Heart left ventricle (tissue), 16 donors: ENCODE measurements at regions of chr19 and their contacts with region 1.

Region 1: GRCh38 chr19:11293433-11294389 is 2.2 kb upstream of the TSPAN16 start:
- DNase-seq: peak; percentile 92 to 98 (median 96)
- ATAC-seq: peak; percentile 88 to 99 (median 98)
- H3K4me3 ChIP-seq: peak overlapping the region in 10 of 12 donors; percentile 9 to 43 (median 18)
- H3K27ac ChIP-seq: peak overlapping the region in 11 of 12 donors; percentile 5 to 74 (median 52)
- H3K4me1 ChIP-seq: peaks cover 0 to 32% (median 6%) of the 10 kb centered on the region in 12 donors
- H3K27me3 ChIP-seq: no peaks in the 10 kb centered on the region
- CTCF ChIP-seq: peak; percentile 95 to 100 (median 98)
- POLR2A ChIP-seq: peak in 1 of 2 donors; percentile 23

Region 2: GRCh38 chr19:11064831-11065303 is 228.8 kb before region 1 on chr19:
- intact Hi-C with region 1: no loop called
- DNase-seq: no peak
- ATAC-seq: peak in 1 of 4 donors; percentile 18
- H3K4me3 ChIP-seq: no peak overlapping the region
- H3K27ac ChIP-seq: no peak overlapping the region
- H3K4me1 ChIP-seq: peaks cover 0 to 4% (median 0%) of the 10 kb centered on the region in 12 donors
- H3K27me3 ChIP-seq: no peaks in the 10 kb centered on the region
- CTCF ChIP-seq: no peak
- POLR2A ChIP-seq: no peak

Region 3: GRCh38 chr19:11339254-11340098 is 45.8 kb after region 1 on chr19 and contains the start of gene RAB3D:
- intact Hi-C with region 1: loop called in 3 of 10 experiments (anchors 1 to 5 kb)
- DNase-seq: peak; percentile 93 to 96 (median 95)
- ATAC-seq: peak; percentile 92 to 98 (median 97)
- H3K4me3 ChIP-seq: peak within 1 kb of the TSS; percentile 56 to 88 (median 77)
- H3K27ac ChIP-seq: peak within 1 kb of the TSS; percentile 41 to 85 (median 78)
- H3K4me1 ChIP-seq: peaks cover 0 to 39% (median 14%) of the 10 kb centered on the region in 12 donors
- H3K27me3 ChIP-seq: no peaks in the 10 kb centered on the region
- CTCF ChIP-seq: no peak
- POLR2A ChIP-seq: peak in 1 of 2 donors; percentile 56
- total RNA-seq, gene RAB3D: 5.4 to 15.1 (median 7.4) TPM

Region 4: DNA sequence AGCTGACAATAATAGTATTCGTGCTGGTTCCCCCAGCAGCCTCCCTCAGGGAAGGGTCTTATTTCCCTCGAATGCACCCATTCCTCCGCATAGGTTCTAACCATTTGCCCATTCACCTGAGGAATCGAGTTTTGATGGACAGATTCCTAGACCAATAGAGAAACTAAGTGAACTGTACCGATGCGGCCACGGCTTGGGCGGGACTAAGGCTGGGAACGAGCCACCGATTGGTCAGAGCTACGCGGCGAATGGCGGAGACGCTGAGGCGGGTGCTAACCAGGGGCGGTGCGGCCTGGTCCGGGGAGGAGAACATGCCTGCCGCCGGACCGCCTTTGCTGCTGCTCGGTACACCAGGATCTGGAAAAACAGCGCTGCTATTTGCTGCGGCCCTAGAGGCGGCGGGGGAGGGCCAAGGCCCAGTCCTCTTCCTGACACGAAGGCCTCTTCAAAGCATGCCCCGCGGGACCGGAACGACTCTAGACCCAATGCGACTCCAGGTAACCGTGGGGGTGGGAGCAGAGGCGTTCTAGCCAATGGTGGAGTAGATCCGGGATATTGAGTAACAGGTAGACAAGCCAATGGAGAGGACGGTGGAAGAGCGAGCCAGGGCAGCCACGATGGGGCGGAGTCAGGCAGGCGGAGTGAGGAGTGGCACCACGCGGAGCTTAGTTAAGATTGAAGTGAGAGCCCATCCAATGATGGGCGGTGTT is 80.9 kb after region 1 on chr19 and contains the start of gene SWSAP1:
- intact Hi-C with region 1: loop called in 6 of 10 experiments (anchors 10 kb)
- DNase-seq: peak; percentile 99
- ATAC-seq: peak; percentile 96 to 98 (median 98)
- H3K4me3 ChIP-seq: peak within 1 kb of the TSS; percentile 25 to 90 (median 70)
- H3K27ac ChIP-seq: peak within 1 kb of the TSS; percentile 92 to 100 (median 96)
- H3K4me1 ChIP-seq: peaks cover 7 to 48% (median 21%) of the 10 kb centered on the region in 12 donors
- H3K27me3 ChIP-seq: no peaks in the 10 kb centered on the region
- CTCF ChIP-seq: no peak
- POLR2A ChIP-seq: no peak
- total RNA-seq, gene SWSAP1: 0.67 to 1.9 (median 1.5) TPM

Region 5: DNA sequence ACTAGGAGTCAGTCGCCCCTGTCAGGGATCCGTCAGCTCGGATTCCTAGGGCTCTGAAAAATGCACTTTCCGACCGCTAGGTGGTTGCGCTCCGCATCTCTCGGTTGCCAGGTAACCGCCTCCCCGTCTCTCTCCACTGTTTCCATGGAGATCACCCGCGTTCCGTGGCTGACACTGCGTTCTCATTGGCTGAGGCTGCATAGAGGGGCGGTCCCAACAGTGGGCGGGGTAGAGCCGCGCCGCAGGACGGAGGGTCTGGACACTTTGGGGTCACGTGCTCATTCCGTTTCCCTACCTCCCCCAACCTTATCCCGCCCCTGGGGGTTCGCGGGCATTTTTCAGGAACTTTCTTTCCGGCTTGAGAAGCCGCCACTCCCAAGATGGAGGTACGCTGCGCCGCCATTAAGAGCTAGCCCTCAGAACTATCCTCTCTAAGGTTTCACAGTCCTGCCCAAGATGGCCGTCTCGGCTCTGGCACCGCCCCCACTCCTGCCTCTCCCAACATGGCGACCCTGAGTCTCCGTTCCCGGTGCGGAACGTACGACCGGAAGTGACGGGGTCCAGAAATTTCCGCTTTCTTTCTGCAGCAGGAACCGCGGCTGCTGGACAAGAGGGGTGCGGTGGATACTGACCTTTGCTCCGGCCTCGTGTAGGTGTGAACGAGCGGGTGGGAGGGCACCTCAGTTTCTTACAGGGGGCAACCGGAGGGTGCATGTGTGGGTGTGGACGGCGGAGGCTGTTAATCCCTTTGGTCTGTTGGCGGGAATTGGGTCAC is 141.5 kb after region 1 on chr19 and contains the starts of genes ODAD3 and PRKCSH:
- intact Hi-C with region 1: loop called in 4 of 10 experiments (anchors 10 kb)
- DNase-seq: peak; percentile 99
- ATAC-seq: peak; percentile 98 to 99 (median 98)
- H3K4me3 ChIP-seq: peak within 1 kb of the TSS; percentile 64 to 90 (median 80)
- H3K27ac ChIP-seq: peak within 1 kb of the TSS in 11 of 12 donors; percentile 73 to 86 (median 81)
- H3K4me1 ChIP-seq: peaks cover 0 to 22% (median 17%) of the 10 kb centered on the region in 12 donors
- H3K27me3 ChIP-seq: no peaks in the 10 kb centered on the region
- CTCF ChIP-seq: peak; percentile 69 to 90 (median 87)
- POLR2A ChIP-seq: peak in 1 of 2 donors; percentile 53
- total RNA-seq, gene ODAD3: 0.18 to 0.69 (median 0.31) TPM in 7 of 9 donors, not detected in the others
- total RNA-seq, gene PRKCSH: 69.3 to 210 (median 120) TPM

Region 6: GRCh38 chr19:11482384-11483050 is 188.8 kb after region 1 on chr19:
- intact Hi-C with region 1: loop called in 8 of 10 experiments (anchors 1 to 10 kb)
- DNase-seq: peak; percentile 80 to 93 (median 85)
- ATAC-seq: peak; percentile 78 to 92 (median 87)
- H3K4me3 ChIP-seq: peak overlapping the region in 11 of 12 donors; percentile 16 to 49 (median 41)
- H3K27ac ChIP-seq: no peak overlapping the region
- H3K4me1 ChIP-seq: peaks cover 0 to 43% (median 22%) of the 10 kb centered on the region in 12 donors
- H3K27me3 ChIP-seq: peaks cover 19 to 59% (median 39%) of the 10 kb centered on the region in 9 donors
- CTCF ChIP-seq: peak; percentile 85 to 96 (median 94)
- POLR2A ChIP-seq: no peak